GM12878 (cell line): ENCODE measurements at regions of chr5 and their contacts with region 1.

Region 1: DNA sequence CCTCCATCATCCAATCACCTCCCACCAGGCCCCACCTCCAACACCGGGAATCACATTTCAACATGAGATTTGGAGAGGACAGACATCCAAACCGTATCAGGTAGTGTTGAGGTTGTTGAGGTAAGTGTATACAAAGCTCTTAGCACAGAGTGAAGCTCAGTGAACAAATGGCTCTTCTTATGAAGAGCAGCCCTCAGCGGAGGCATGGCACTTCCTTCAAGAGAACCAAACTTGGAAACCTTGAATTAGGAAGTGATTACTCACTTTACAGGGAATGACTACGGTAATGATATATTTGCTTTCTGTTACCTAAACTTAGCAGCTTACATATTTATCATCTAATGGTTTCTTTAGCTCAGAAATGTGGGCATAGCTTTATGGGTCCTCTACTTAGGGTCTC is 92.8 kb downstream of the IQGAP2 start:
- DNase-seq: no peak
- ATAC-seq: no peak
- H3K4me3 ChIP-seq: no peak overlapping the region
- H3K27ac ChIP-seq: no peak overlapping the region
- H3K4me1 ChIP-seq: no peaks in the 10 kb centered on the region
- H3K27me3 ChIP-seq: no peaks in the 10 kb centered on the region
- CTCF ChIP-seq: no peak
- EP300 ChIP-seq: no peak
- POLR2A ChIP-seq: no peak
- RAD21 ChIP-seq: no peak

Region 2: GRCh38 chr5:76485514-76485913 is 10.4 kb before region 1 on chr5:
- CTCF ChIA-PET with region 1: interaction called, 4 read pairs
- POLR2A ChIA-PET with region 1: interaction called, 3 read pairs
- RAD21 ChIA-PET with region 1: no interaction called
- SMC1A ChIA-PET with region 1: interaction called, 11 read pairs
- in situ Hi-C with region 1: no loop called
- intact Hi-C with region 1: no loop called
- DNase-seq: no peak
- ATAC-seq: no peak
- H3K4me3 ChIP-seq: no peak overlapping the region
- H3K27ac ChIP-seq: no peak overlapping the region
- H3K4me1 ChIP-seq: peaks cover 6% of the 10 kb centered on the region; the same call in 1 of the 2 replicates
- H3K27me3 ChIP-seq: no peaks in the 10 kb centered on the region
- CTCF ChIP-seq: no peak
- EP300 ChIP-seq: no peak
- POLR2A ChIP-seq: no peak
- RAD21 ChIP-seq: no peak